AG04449 (cell line): ENCODE measurements at regions of chr19 and their contacts with region 1.

Region 1: DNA sequence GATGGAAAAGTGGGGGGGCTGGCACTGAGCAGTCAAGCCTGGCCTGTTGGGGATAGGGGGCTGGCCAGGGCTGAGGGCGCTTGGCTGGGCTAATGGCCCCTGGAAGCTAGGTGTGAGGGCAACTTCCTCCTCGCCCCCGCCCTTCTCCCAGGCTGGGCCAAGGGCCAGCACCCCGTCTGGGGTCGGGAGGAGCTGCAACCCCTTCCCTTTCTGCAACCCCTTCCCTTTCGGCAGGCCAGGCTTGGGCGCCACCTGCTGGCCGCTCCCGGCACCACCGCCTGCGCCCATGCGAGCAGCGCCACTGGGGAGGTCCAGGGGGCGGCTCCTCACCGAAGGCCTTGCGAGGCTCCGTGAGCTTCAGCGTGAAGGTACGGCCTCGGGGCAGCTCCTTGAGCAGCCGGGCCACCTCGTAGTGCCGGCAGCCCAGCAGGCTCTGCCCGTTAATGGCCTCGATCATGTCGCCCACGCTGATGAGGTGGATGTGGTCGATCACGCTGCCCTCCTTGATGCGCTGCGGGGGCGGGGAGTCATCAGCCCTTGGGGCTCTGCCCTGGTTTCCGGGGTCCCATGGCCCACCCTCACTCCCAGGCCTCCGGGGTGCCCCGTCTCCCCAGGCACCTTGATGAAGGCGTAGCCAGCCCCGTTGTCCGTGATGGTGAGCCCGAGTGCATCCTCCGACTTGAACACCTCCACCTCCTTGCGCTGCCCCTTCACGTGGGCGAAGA is 5.0 kb upstream of the PTGER1 start:
- DNase-seq: no peak
- H3K4me3 ChIP-seq: no peak overlapping the region
- CTCF ChIP-seq: peak; percentile 95

Region 2: GRCh38 chr19:14496028-14496833 is 16.1 kb after region 1 on chr19 and contains the start of gene GIPC1:
- CTCF ChIA-PET with region 1: interaction called, 78 read pairs
- POLR2A ChIA-PET with region 1: interaction called, 5 read pairs
- DNase-seq: peak; percentile 92
- H3K4me3 ChIP-seq: peak within 1 kb of the TSS; percentile 85
- CTCF ChIP-seq: no peak

Region 3: DNA sequence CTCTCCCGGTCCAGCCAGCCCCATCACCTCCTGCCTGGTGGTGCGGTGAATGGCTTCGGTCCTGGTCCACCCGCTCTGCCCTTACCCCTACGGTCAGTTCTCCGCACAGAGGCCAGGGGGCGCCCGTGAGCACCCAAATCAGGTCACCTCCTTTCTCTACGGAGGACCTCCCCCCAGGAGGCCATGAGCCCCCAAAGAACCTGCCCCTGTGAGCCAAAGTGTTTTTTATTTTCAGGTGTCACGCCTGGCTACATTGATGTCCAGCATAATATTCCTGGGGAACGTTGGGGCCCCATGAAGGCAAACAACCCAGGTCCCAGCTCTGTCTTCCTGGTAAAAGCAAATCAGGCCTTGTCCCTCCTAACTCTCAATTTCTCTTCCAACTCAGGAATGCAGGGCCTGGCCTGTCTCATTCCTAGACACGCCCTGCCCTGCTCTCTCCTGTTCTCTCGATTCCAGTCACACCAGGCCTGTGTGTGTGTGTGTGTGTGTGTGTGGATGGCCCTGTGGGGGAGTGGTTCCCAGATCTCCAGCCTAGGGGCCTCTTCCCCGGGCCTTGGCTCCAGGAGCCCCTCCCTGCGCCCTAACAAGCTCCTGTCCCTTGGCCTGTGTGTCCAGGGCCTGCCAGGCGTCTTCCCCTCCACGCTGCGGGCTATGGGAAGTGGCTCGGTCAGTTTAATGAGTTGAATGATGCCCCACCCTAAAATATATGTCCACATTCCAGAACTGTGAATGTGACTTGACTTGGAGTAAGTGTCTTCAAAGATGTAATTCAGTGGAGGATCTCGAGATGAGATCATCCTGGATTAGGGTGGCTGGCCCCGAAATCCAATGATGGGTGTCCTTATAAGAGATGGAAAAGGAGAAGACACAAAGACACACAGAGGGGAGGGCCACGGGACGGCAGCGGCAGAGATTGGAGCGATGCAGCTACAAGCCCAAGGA is 25.6 kb after region 1 on chr19:
- CTCF ChIA-PET with region 1: interaction called, 36 read pairs
- POLR2A ChIA-PET with region 1: interaction called, 3 read pairs
- DNase-seq: peak; percentile 81
- H3K4me3 ChIP-seq: no peak overlapping the region
- CTCF ChIP-seq: peak; percentile 93

Region 4: DNA sequence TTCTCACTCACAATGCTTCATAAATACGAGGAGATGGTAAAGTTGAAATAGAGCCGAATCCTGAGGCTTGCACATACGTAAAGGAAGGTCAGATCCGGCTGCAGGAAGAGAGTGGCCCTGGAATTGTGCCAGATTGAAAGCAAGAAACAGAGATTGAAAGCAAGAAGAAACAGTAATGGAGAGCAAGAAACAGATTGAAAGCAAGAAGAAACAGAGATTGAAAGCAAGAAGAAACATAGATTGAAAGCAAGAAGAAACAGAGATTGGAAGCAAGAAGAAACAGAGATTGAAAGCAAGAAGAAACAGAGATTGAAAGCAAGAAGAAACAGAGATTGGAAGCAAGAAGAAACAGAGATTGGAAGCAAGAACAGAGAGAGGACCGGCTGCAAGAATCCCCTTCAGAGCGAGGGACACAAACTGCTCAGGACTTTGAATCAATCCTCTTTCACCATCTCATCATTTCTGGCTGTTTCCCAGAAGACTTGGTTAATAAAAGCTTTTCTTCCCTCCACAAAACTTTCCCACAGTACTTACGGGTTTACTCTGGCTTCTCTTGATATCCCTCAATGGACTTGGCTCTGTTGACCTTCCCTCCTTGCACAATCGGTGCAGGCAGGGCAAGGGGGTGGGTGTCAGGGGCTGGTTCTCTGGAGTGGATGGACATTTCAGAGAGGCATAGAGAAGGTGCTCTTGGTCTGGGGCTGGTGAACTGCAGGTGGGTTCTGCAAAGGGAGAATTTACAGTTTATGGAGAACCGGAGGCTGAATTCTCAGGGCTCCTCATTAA is 329.3 kb after region 1 on chr19:
- CTCF ChIA-PET with region 1: no interaction called
- POLR2A ChIA-PET with region 1: no interaction called
- DNase-seq: no peak
- H3K4me3 ChIP-seq: no peak overlapping the region
- CTCF ChIP-seq: no peak